ENCODE measurements at regions of chr6 and their contacts with region 1.

Region 1: DNA sequence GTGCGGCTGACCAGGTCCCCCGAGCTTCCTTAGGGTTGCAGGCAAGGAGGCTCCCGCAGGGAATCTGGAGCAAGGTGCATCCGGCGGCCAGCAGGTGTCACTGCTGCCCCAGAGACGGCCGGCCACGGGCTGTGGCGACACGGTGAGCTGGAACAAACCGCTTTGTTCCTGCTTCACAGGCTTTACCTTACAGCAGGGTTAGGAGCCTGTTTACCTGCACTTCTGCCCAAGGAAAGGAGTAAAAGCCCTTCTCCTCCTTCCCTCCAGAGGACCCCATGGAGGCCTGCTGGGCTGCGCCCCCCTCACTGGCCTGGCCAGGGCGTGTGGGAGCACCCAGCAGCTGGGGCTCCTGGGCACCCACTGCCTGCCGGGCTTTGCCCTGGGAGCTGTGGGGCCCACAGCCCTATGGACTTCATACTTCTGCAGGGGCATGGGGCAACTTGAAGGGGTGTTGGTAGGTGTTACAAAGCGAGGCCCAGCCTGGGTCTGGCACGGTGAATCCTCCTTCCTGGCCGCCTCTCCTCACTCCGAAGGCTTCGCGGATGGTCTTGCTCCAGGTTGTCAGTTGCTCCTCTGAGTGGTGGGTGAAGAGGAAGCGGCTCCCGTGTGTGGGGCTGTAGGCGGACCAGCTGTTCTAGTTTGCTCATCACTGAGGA is 88.4 kb downstream of the CDC5L start:
- DNase-seq: peak; percentile 77
- H3K4me3 Mint-ChIP-seq: no peak overlapping the region
- H3K27ac Mint-ChIP-seq: peak overlapping the region; percentile 26
- H3K4me1 Mint-ChIP-seq: peaks cover 4% of the 10 kb centered on the region
- H3K27me3 Mint-ChIP-seq: peaks cover 2% of the 10 kb centered on the region

Region 2: DNA sequence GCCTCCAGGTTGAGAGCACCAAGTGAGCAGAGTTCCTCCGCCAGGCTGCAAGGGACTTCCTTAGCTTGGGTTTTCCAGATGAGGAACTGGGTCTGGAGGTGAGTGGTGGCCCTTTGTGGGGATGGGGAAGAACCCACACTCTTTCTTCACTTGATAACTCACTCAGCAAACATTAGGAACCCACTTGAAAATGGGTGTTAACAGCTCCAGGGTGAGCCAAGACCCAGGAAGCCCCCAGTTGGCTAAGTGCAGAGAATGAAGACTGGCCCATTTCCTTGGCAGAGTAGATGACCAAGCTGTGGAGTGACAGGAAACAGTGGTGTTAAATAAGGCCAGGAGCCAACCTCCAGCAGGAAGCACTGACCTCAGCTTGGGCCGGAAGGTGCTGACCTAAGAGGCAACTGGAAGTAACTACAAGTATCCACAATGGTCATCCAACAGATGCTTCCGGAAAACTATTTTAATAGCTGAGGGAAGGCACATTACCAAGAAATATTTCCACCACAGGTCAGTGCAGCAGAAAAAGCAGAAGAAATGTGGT is 371.4 kb before region 1 on chr6:
- CTCF ChIA-PET with region 1: no interaction called
- POLR2A ChIA-PET with region 1: no interaction called
- DNase-seq: no peak
- H3K4me3 Mint-ChIP-seq: no peak overlapping the region
- H3K27ac Mint-ChIP-seq: no peak overlapping the region
- H3K4me1 Mint-ChIP-seq: peaks cover 11% of the 10 kb centered on the region
- H3K27me3 Mint-ChIP-seq: no peaks in the 10 kb centered on the region

Region 3: GRCh38 chr6:44268095-44268628 is 207.7 kb before region 1 on chr6:
- CTCF ChIA-PET with region 1: no interaction called
- POLR2A ChIA-PET with region 1: no interaction called
- DNase-seq: peak; percentile 70
- H3K4me3 Mint-ChIP-seq: no peak overlapping the region
- H3K27ac Mint-ChIP-seq: no peak overlapping the region
- H3K4me1 Mint-ChIP-seq: peaks cover 40% of the 10 kb centered on the region
- H3K27me3 Mint-ChIP-seq: peaks cover 44% of the 10 kb centered on the region

Region 4: DNA sequence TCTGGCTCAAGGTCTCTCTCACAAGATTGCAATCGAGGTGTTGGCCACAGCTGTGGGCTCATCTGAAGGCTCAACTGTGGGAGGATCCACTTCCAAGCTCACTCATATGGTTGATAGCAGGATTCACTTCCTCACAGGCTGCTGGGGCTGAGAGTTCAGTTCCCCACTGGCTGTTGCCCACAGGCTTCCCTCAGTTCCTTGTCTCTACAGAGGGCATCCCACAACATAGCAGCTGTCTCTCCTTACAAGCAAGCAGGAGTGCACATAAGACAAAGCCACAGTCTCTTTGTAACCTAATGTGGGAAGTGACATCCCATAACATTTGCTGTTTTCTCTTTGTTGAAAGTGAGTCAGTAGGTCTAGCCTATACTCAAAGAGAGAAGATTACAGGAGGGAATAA is 119.4 kb before region 1 on chr6:
- CTCF ChIA-PET with region 1: no interaction called
- POLR2A ChIA-PET with region 1: no interaction called
- DNase-seq: no peak
- H3K4me3 Mint-ChIP-seq: no peak overlapping the region
- H3K27ac Mint-ChIP-seq: no peak overlapping the region
- H3K4me1 Mint-ChIP-seq: no peaks in the 10 kb centered on the region
- H3K27me3 Mint-ChIP-seq: peaks cover 33% of the 10 kb centered on the region

Region 5: GRCh38 chr6:44431118-44431725 is 44.7 kb before region 1 on chr6:
- CTCF ChIA-PET with region 1: interaction called, 11 read pairs
- POLR2A ChIA-PET with region 1: no interaction called
- DNase-seq: peak; percentile 51
- H3K4me3 Mint-ChIP-seq: no peak overlapping the region
- H3K27ac Mint-ChIP-seq: no peak overlapping the region
- H3K4me1 Mint-ChIP-seq: peaks cover 1% of the 10 kb centered on the region
- H3K27me3 Mint-ChIP-seq: no peaks in the 10 kb centered on the region

Region 6: DNA sequence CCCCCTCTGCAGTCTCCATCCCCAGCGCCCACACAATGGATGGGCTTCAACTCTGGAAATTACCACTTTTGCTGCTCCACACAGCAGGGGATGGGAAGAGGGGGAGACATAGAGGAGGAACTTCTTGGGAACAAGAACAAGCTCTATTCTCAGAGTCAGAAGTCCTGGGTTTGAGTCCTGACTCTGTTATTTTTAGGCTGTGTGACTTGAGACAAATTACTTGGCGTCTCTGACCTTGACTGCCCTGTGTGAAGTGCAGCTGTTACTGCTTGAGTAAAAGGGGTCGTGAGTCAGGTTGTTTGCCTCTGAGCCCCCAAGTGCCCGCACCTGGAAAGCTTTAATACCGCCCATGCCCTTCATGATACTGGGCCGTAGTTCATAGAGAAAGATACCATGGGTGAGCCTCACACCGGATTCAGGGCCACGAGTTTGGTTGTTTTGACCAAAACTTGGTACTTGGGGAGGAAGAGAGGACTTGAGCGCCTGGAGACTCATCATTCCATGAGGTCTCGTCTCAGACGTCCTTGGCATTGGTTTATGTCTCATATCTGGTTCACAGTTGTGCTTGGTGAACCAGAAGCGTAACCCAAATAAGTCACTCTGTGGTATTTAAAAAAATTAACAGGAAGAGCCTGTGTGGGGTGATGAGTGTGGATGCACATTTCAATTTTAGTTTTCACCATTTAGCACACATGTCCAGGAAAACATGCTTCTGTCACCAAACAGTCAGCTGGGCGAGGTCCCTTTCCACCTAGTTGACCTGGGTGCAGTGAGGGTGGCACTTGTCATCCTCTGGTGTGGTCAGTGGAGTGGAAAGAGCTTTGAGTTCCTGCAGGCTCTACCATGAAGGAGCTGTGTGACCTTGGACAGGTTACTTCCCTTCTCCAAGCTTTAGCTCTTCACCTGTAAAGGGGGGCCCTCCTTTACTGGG is 12.8 kb before region 1 on chr6:
- CTCF ChIA-PET with region 1: interaction called, 13 read pairs
- POLR2A ChIA-PET with region 1: no interaction called
- DNase-seq: no peak
- H3K4me3 Mint-ChIP-seq: no peak overlapping the region
- H3K27ac Mint-ChIP-seq: no peak overlapping the region
- H3K4me1 Mint-ChIP-seq: peaks cover 4% of the 10 kb centered on the region
- H3K27me3 Mint-ChIP-seq: peaks cover 3% of the 10 kb centered on the region

Region 7: DNA sequence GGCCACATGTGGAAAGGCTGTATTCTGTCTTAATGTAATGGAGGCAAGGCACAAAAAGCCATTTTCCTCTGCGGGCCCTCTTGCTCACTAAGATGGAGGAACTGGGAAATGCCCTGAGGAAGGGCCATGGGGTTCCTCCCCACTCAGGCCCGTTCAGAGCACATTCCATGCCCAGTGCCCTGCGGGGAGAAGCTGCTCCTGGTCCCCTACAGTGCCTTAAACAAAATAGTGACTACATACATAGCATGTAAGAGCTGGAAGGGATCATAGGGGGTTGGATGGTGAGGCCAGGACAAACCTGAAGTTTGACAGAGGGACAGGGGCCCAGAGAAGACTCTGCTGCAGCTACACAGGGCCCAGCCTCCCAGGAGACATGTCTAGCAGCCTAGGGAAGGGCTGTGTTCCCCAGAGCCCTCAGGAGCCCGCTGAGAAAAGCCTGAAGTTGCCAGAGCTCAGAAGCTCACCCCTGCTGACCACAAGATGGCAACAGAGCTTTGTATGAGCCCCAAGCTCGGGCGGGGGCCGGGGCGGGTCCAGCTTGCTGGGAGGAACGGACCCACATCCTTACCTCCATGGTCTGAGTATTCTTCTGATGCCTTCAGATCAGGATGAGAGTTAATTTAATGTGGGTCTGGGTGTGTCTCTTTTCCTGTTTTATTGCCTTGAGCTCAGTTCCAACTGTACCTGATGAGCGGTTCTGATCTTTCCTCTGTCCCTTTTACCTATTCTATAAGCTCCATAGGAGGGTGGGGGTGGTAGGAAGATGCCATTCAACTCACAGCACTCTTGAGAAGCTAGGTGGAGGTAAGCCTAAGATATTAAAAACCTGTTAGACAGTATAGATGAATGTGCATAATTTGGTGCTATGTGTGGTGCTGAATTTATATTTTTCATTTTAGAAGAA is 154.5 kb after region 1 on chr6:
- CTCF ChIA-PET with region 1: interaction called, 11 read pairs
- POLR2A ChIA-PET with region 1: no interaction called
- DNase-seq: peak; percentile 60
- H3K4me3 Mint-ChIP-seq: no peak overlapping the region
- H3K27ac Mint-ChIP-seq: no peak overlapping the region
- H3K4me1 Mint-ChIP-seq: peaks cover 24% of the 10 kb centered on the region
- H3K27me3 Mint-ChIP-seq: peaks cover 3% of the 10 kb centered on the region

Region 8: DNA sequence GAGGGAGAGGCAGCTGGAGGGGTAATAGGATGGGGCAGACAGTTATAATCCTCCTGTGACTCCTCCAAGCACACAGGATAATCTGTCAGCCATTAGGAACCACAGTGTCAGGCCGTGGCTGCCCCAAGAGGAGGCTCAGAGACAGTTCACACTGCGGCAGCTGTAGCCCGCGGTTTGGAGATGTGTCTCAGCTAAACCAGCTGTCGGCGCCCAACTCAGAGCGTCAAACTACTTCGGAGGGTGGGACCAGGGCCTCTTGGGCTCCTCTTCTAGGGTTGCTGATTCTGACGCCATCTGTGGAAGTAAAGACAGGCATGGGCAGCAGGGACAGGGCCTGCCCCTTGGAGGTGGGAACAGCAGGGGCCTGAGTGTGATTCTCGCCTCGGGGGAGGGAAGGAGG is 221.4 kb after region 1 on chr6:
- CTCF ChIA-PET with region 1: no interaction called
- POLR2A ChIA-PET with region 1: no interaction called
- DNase-seq: no peak
- H3K4me3 Mint-ChIP-seq: no peak overlapping the region
- H3K27ac Mint-ChIP-seq: no peak overlapping the region
- H3K4me1 Mint-ChIP-seq: peaks cover 6% of the 10 kb centered on the region
- H3K27me3 Mint-ChIP-seq: no peaks in the 10 kb centered on the region

Region 9: DNA sequence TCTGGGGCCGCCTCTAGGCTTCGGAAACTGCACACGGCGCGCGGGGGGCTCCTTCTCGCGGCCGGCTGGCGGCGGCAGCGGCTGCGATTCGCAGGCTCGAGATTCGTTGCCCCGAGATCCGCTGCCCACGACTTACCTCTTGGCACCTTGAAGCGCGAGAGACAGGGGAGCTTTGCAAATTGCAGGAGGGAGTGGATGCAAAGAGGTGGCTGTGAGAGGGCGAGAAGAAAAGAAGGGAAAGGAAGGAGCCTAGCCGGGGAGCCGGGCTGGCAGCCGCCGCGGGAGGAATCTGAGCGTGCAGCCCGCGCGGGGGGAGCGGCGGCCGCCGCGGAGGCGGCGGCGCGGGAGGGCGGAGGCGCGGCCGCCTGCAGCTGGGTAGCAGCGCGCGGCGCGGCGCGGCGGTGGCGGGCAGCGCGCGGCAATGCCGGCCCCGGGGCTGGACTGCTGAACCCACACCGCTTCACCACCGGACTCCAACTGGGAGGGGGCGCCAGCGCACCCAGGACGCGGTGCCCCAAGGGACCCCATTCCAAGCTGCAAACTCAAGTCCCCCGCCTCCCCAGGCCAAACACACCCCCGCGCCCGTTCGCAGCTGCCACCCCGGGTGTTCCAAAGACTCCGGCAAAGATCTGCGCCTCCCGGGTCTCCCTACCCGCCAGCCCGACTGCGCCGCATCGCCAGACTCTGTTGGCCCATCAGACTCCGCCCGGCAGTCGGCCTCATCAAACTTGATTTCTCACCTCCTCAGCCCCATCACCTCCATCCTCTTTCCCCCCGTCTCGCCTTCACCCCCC is 946.0 kb after region 1 on chr6:
- CTCF ChIA-PET with region 1: interaction called, 11 read pairs
- POLR2A ChIA-PET with region 1: no interaction called
- DNase-seq: peak; percentile 65
- H3K4me3 Mint-ChIP-seq: peak overlapping the region; percentile 99
- H3K27ac Mint-ChIP-seq: peak overlapping the region; percentile 98
- H3K4me1 Mint-ChIP-seq: peaks cover 42% of the 10 kb centered on the region
- H3K27me3 Mint-ChIP-seq: peaks cover 2% of the 10 kb centered on the region